ENCODE measurements at regions of chr2 and their contacts with region 1.

Region 1: DNA sequence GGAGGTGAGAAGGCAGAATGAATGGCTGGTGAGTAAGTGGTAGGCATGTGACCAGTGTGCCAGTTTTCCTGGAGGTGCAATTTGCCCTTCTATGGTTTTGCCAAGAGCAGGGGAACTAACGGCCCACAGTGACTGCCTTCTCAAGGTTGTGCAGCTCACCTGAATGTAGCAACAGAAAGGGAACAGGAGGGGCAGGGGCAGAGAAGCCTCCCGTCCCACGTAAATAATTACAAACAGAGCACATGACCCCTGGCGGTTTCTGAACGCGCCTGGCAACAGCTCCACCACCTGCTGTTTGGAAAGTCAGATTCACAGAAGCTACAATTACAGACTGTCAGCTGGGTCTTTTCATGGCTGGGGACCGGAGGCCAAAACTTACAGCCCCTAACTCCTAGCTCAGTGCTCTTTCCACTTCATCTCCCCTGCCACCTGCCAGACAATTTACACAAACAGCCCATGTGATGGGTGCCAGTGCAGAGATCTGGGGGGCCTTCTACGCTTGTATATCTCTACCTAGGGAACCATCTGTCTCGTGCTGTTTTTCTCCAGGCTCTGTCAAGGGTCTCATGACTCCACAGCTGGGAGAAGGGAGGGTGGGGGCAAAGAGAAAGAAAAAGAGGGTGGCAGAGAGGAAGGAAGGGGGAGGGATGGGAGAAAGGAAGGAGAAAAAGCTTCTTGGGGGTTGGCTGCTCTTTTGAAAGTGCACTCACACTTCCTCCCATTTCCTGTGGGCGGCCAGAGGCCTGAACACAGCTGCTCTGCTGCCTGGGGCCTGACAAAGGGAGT is 69.6 kb downstream of the POLR1A start:
- DNase-seq: peak; percentile 61
- H3K4me3 Mint-ChIP-seq: peak overlapping the region; percentile 65
- H3K27ac Mint-ChIP-seq: peak overlapping the region; percentile 98
- H3K4me1 Mint-ChIP-seq: peaks cover 60% of the 10 kb centered on the region
- H3K27me3 Mint-ChIP-seq: no peaks in the 10 kb centered on the region

Region 2: DNA sequence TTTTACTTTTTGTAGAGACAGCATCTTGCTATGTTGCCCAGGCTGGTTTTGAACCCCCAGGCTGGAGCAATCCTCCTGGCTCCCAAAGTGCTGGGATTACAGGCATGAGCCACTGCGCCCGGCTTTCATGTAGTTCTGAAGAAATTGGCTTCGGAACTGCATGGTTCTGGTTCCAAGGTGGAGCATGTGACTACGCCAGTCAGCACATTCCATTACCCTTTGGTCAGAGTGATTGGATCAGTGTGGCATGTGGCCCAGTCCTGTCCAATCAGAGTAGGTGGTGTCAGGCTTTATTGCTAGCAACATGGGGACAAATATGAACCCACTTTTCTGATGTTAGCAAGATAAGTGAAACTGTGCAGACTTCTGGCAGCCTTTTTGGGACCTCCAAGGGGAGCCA is 298.6 kb before region 1 on chr2:
- intact Hi-C with region 1: no loop called
- DNase-seq: no peak
- H3K4me3 Mint-ChIP-seq: no peak overlapping the region
- H3K27ac Mint-ChIP-seq: no peak overlapping the region
- H3K4me1 Mint-ChIP-seq: no peaks in the 10 kb centered on the region
- H3K27me3 Mint-ChIP-seq: peaks cover 47% of the 10 kb centered on the region

Region 3: DNA sequence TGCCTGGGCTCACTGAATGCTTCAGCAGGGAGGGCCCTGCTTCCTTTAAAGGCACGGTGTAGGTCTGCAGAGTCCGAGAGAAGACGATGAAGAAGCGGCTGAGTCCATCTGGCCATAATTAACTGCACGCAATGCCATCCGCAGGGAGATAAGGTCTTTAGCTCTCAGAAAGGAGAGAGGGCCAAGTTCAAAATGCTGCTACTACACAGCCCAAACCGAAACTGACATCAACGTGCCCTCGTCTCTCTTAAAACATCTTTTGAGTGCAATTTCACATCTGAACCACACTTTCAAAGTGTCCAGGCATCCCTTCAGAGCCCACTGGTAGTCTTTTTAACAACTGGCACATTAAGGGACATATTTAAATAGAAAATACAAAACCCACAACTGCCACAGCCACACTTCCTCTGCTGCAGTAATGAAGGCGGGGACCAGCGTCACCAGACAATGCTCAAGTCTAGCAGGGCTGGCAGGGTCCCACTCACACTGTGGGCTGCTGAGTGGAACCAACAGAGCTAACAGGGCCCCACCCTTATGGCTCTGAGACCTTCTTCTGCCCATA is 183.1 kb before region 1 on chr2:
- intact Hi-C with region 1: loop called (anchors 1 kb)
- DNase-seq: peak; percentile 54
- H3K4me3 Mint-ChIP-seq: peak overlapping the region; percentile 75
- H3K27ac Mint-ChIP-seq: peak overlapping the region; percentile 99
- H3K4me1 Mint-ChIP-seq: peaks cover 62% of the 10 kb centered on the region
- H3K27me3 Mint-ChIP-seq: no peaks in the 10 kb centered on the region

Region 4: DNA sequence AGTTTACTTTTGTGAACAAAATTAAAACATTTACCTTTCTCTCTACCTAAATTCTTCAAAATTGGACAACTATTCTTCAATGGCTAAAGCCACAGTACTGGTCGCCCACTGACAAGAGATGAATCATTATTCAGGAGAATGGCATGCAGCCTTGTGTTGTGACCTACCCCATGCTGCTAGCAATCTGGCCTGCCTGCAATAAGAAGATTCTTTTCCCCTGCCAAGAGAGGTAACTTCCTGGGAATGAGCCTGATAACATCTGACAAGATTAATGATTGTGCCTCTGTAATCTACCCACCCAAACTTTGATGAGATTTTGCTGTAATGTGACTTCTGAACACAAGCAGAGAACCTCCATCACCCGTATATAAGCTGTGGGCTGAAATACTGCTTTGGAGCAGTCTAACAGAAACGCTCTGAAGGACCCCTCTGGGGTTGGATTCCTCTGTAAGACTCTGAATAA is 100.3 kb before region 1 on chr2:
- intact Hi-C with region 1: loop called (anchors 5 kb)
- DNase-seq: no peak
- H3K4me3 Mint-ChIP-seq: no peak overlapping the region
- H3K27ac Mint-ChIP-seq: no peak overlapping the region
- H3K4me1 Mint-ChIP-seq: peaks cover 21% of the 10 kb centered on the region
- H3K27me3 Mint-ChIP-seq: peaks cover 9% of the 10 kb centered on the region

Region 5: DNA sequence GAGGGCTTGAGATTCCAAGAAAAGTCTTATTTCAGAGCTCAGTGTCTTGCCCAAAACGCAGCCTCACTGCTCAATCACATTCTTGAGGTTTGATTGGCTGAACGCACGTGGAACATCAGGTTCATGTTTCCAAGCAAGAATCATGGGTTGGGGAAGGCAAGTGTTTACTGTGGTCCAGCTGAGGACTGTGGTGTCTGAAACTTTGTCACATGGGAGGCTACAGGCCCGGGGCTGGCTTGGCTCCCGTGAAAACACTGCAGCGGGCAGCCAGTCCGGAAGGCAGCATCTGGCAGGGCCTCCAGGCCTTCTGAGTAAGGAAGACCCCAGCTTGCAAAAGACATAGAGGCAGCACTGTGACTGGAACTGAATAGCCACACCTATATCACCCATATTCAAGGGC is 15.1 kb before region 1 on chr2:
- intact Hi-C with region 1: loop called (anchors 2 kb)
- DNase-seq: no peak
- H3K4me3 Mint-ChIP-seq: no peak overlapping the region
- H3K27ac Mint-ChIP-seq: no peak overlapping the region
- H3K4me1 Mint-ChIP-seq: peaks cover 10% of the 10 kb centered on the region
- H3K27me3 Mint-ChIP-seq: no peaks in the 10 kb centered on the region

Region 6: GRCh38 chr2:86105252-86105968 is 69.3 kb after region 1 on chr2 and contains the start of gene POLR1A:
- intact Hi-C with region 1: loop called (anchors 2 kb)
- DNase-seq: peak; percentile 85
- H3K4me3 Mint-ChIP-seq: peak within 1 kb of the TSS; percentile 94
- H3K27ac Mint-ChIP-seq: peak within 1 kb of the TSS; percentile 99
- H3K4me1 Mint-ChIP-seq: peaks cover 39% of the 10 kb centered on the region
- H3K27me3 Mint-ChIP-seq: no peaks in the 10 kb centered on the region
- total RNA-seq, gene POLR1A: 54.5 and 61.8 TPM in 2 replicates

Region 7: DNA sequence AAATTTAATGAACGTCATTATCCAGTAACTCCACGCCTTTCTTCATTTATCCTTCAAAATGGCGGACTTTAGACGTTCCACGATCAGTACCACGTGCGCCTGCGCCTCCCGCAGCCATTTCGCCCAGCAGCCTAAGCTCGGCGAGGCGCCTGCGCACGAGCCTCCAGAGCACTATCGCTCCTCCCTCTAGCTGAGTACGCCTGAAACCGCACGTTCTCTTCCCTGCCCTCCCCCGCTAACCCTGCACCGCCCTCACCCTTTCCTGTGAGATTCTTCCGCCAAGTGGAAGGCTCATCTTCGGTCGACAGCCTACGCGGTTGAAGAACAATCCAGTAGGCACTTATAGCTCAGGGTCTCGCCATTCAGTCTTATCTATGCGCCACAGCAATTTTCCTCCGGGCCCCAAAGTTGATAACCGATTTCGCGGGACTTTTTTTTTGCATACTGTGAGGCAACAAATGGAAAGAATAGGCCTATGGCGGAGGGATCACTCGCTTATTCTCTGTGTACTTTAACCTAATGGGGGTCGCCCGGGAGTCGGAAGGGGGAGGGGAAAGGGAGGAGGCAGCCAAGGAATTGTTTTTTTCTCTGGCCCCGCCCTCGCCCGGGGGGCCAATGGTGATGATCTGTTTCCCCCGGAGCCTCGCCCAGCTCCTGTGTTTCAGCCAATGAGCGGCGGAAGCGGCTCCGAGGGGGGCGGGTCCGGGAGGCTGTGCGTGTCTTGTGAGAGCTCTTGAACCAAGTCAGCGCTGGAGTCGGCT is 404.7 kb after region 1 on chr2 and contains the start of gene KDM3A:
- intact Hi-C with region 1: loop called (anchors 2 kb)
- DNase-seq: peak; percentile 100
- H3K4me3 Mint-ChIP-seq: peak within 1 kb of the TSS; percentile 93
- H3K27ac Mint-ChIP-seq: peak within 1 kb of the TSS; percentile 98
- H3K4me1 Mint-ChIP-seq: peaks cover 38% of the 10 kb centered on the region
- H3K27me3 Mint-ChIP-seq: peaks cover 6% of the 10 kb centered on the region
- total RNA-seq, gene KDM3A: 74.5 and 78.2 TPM in 2 replicates